HEK293 (cell line): ENCODE measurements at regions of chr6 and their contacts with region 1.

Region 1: DNA sequence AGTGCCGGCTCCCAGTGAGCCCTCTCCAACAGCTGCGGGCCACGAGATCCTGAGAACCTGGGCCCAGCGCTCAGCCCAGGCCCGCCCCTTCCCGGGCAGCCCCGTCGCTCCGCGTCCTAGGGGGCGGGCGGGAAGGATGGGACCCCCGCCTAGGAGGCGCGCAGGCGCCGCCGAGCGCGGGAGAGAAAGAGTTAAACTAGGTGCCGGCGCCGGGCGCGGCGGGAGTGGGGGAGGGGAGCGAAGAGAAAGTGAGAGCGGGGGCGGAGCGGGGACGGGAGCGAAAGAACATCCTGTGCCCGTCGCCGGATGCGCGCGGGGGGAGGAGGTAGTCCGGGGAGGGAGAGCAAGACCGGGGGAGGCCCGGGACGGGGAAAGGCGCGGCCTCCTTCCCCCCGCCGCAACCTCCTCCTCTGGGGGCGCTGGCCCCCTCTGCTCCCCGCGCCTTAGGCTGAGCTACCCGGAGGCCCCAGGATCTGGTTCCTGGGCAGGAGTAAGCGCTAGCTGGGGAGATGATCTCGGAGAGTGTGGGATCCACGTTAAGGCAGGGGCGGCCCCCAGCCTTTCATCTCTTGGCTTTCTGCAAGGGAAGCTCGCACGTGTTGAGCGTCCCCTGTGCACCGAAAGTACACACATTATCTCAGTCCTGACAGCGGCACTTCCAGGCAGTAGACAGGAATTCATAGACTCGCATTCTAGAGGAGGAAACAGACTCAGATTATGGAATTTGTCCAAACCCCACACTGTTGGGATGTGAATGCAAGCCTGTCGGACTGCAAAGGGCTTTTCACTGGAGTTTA is 4.9 kb upstream of the ARMC12 start:
- H3K4me3 ChIP-seq: peak overlapping the region; percentile 68
- H3K27ac ChIP-seq: peak overlapping the region; percentile 79
- H3K4me1 ChIP-seq: peaks cover 13% of the 10 kb centered on the region
- CTCF ChIP-seq: peak; percentile 88

Region 2: DNA sequence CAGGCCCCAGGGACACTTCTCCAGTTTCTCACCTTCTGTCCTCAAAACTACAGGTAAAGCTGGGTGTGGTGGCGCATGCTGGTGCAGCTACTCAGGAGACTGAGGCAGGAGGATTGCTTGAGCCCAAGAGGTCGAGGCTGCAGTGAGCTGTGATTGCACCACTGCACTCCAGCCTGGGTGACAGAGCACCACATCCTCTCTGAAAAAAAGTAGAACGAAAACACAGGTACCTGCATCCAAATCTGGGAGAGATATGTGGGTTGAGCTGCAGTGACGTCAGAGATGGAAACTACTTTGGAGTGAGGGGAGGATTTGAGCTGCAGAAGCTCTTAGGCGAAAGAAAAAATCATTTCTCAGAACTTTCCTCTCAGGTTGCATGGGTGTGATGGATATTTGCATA is 215.3 kb before region 1 on chr6:
- CTCF ChIA-PET with region 1: interaction called, 110 read pairs
- POLR2A ChIA-PET with region 1: interaction called, 9 read pairs
- H3K4me3 ChIP-seq: no peak overlapping the region
- H3K27ac ChIP-seq: no peak overlapping the region
- H3K4me1 ChIP-seq: no peaks in the 10 kb centered on the region
- CTCF ChIP-seq: no peak

Region 3: GRCh38 chr6:35562053-35562452 is 169.9 kb before region 1 on chr6:
- CTCF ChIA-PET with region 1: interaction called, 22 read pairs
- POLR2A ChIA-PET with region 1: no interaction called
- H3K4me3 ChIP-seq: no peak overlapping the region
- H3K27ac ChIP-seq: no peak overlapping the region
- H3K4me1 ChIP-seq: peaks cover 10% of the 10 kb centered on the region; the same call in 1 of the 2 replicates
- CTCF ChIP-seq: no peak

Region 4: GRCh38 chr6:35590622-35591066 is 141.3 kb before region 1 on chr6:
- CTCF ChIA-PET with region 1: interaction called, 258 read pairs
- POLR2A ChIA-PET with region 1: interaction called, 3 read pairs
- H3K4me3 ChIP-seq: no peak overlapping the region
- H3K27ac ChIP-seq: no peak overlapping the region
- H3K4me1 ChIP-seq: no peaks in the 10 kb centered on the region
- CTCF ChIP-seq: no peak

Region 5: GRCh38 chr6:35642471-35643161 is 89.3 kb before region 1 on chr6:
- CTCF ChIA-PET with region 1: interaction called, 11 read pairs
- POLR2A ChIA-PET with region 1: no interaction called
- H3K4me3 ChIP-seq: no peak overlapping the region
- H3K27ac ChIP-seq: no peak overlapping the region
- H3K4me1 ChIP-seq: no peaks in the 10 kb centered on the region; the same call in 1 of the 2 replicates
- CTCF ChIP-seq: no peak

Region 6: DNA sequence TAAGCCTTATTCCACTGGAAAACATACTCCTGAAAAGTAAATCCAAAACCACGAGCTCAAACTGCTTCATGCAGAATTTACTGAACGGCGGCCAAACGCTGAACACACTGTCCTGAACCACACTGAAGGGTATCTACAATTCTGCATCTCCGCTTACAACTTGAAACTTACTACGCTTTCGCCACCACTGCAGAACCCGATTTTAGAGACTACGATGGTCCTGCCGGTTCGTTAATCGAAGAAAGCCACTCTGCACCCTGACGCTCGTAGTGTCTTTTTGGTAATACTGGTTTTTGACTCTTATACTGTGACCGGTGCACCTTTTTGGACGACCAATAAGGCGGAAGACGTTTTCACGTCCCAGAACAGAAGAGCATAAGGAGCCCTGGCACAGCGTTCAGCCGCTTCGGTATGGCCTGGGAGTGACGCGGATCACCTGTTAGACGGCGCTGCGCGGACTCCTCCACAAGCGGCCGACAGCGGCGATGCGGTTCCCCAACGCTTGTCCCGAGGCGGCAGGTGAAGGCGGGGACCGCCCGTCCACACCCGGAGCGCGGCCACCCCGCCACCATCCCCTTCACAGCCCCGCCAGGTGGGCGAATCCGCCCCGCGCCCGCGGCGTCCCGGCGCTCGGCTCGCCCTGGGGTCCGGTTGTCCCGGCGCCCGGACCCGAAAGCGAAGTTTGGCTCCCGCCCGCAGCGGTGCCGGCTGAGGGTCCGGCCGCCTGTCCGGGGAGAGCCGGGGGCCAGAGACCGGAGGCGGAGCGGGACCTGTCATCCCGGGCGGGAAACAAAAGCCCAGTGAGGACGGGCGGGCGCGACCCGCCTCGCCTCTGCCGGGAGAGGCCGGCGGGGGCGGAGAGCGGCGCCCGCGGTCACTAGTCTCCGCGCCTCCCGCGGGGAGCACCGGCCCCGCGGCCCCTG is 44.0 kb before region 1 on chr6:
- CTCF ChIA-PET with region 1: interaction called, 18 read pairs
- POLR2A ChIA-PET with region 1: interaction called, 14 read pairs
- H3K4me3 ChIP-seq: peak overlapping the region; percentile 72
- H3K27ac ChIP-seq: peak overlapping the region; percentile 92
- H3K4me1 ChIP-seq: no peaks in the 10 kb centered on the region
- CTCF ChIP-seq: peak; percentile 49; the same call in 1 of the 2 replicates

Region 7: DNA sequence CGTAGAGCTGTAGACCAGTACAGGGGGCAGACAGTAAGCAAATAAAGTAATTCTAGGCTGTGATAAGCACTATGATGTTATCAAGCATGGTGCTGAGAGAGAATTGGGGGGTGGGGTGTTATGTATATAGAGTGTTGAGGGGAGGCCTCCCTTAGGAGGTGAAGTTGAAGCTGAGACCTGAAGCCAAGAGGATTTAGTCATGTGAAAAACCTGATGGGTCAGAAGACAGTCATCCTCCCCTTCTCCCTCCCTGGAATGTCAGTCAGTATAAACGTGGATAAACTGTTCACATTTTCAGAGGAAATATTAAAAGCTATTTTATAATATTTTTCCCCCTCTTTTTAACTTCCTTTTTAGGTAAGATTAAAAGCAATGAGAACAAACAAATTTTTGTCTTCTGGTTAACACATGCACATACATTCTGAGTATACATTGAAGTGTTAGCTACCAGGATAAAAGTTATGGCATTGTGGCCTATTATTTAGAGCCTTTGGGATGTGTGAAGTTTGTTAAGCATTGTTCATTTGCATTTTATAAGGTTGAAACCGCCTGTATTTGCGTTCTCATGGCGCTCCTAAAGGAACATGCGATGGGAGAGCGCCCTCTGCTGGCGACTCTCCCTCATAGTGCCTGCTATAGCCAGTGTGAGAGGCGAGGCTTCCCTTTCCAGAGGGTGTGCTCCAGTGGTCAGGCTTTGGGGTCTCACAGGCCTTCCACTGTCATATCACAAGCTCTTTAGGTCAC is 363.0 kb after region 1 on chr6:
- CTCF ChIA-PET with region 1: interaction called, 15 read pairs
- POLR2A ChIA-PET with region 1: no interaction called
- H3K4me3 ChIP-seq: no peak overlapping the region
- H3K27ac ChIP-seq: no peak overlapping the region
- H3K4me1 ChIP-seq: no peaks in the 10 kb centered on the region
- CTCF ChIP-seq: peak; percentile 84